Naive thymus-derived CD8-positive, alpha-beta T cell (primary cell): ENCODE measurements at regions of chr22 and their contacts with region 1.

Region 1: GRCh38 chr22:36331306-36331911 is 56.4 kb downstream of the MYH9 start:
- DNase-seq: peak; percentile 41 to 89 (median 74)
- ATAC-seq: peak; percentile 43 to 62
- H3K4me3 Mint-ChIP-seq: peak overlapping the region; percentile 80 to 96 (median 92)
- H3K27ac Mint-ChIP-seq: peak overlapping the region; percentile 96 to 99 (median 99)
- H3K4me1 Mint-ChIP-seq: peaks cover 71 to 99% (median 97%) of the 10 kb centered on the region in 4 donors
- H3K27me3 Mint-ChIP-seq: no peaks in the 10 kb centered on the region

Region 2: GRCh38 chr22:36287881-36288516 is 43.4 kb before region 1 on chr22:
- POLR2A ChIA-PET with region 1: interaction called, 17 read pairs
- DNase-seq: no peak
- ATAC-seq: no peak
- H3K4me3 Mint-ChIP-seq: peak overlapping the region in 8 of 10 donors; percentile 18 to 82 (median 46)
- H3K27ac Mint-ChIP-seq: peak overlapping the region; percentile 51 to 96 (median 88)
- H3K4me1 Mint-ChIP-seq: peaks cover 30 to 58% (median 51%) of the 10 kb centered on the region in 4 donors
- H3K27me3 Mint-ChIP-seq: no peaks in the 10 kb centered on the region

Region 3: GRCh38 chr22:36352803-36353507 is 21.5 kb after region 1 on chr22:
- POLR2A ChIA-PET with region 1: interaction called, 2,215 read pairs
- DNase-seq: peak in 4 of 10 donors; percentile 51 to 90 (median 78)
- ATAC-seq: peak; percentile 30 to 56
- H3K4me3 Mint-ChIP-seq: peak overlapping the region; percentile 52 to 91 (median 78)
- H3K27ac Mint-ChIP-seq: peak overlapping the region; percentile 90 to 99 (median 94)
- H3K4me1 Mint-ChIP-seq: peaks cover 50 to 96% (median 94%) of the 10 kb centered on the region in 4 donors
- H3K27me3 Mint-ChIP-seq: no peaks in the 10 kb centered on the region

Region 4: DNA sequence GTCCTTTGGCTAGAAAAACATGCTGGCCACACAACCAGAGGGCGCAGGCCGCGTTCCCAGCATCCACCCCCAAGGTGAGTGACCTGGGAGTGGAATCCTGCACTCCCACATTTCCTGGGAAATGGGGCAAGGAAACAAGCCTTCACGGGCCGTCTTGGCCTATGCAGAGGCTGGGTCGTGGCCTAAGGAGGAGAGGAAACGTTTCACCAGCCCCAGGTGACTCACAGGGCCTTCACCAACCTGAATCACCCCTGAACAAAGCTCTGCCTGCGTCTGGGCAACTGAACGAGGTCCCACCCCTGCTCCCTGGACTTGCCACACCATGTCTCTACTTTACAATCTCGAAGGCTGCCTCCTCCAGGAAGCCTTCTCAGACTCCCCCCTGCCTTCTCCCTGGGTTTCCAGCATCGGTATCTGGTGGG is 43.2 kb after region 1 on chr22:
- POLR2A ChIA-PET with region 1: interaction called, 2,215 read pairs
- DNase-seq: peak in 2 of 10 donors; percentile 9 to 49
- ATAC-seq: no peak
- H3K4me3 Mint-ChIP-seq: peak overlapping the region; percentile 48 to 96 (median 77)
- H3K27ac Mint-ChIP-seq: peak overlapping the region; percentile 90 to 99 (median 96)
- H3K4me1 Mint-ChIP-seq: peaks cover 44 to 97% (median 93%) of the 10 kb centered on the region in 4 donors
- H3K27me3 Mint-ChIP-seq: no peaks in the 10 kb centered on the region

Region 5: DNA sequence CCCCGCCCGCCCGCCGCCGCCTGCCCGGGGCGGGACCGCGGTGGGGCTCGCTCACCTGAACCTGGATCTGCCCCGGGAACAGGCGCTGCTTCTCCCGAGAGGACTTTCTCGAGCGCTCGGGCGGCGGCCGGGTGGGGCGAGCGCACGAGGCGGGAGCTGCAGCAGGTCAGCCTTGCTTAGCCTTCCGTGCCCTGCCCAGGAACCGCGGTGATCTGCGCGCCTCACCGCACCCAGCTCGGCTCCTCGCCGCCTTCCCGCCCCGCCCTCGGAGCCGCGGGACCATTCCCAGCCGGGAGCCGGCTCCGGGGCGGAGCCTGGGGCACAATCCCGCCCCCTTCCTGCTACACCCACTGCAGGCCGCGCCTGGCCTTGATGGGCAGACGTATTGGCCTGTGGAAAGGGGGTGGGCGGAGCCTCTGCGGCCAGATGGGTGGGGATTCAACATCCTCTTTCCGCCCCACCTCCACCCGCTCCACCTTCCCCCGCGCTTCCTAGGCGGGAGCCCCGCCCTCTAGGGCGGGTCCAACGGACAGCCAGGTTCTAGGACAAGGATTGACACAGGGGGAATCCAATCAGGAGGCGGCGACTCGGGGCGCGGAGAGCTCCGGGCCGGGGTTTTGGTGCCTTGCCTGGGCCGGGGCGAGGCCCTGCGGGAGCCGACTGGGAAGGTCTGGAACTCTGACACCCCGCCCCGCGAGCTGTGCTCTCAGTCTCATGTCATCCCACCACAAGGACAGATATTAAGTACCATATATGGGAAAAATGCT is 56.5 kb after region 1 on chr22 and contains the start of gene MYH9:
- POLR2A ChIA-PET with region 1: interaction called, 2,215 read pairs
- DNase-seq: peak; percentile 96 to 99 (median 98)
- ATAC-seq: peak; percentile 71 to 81
- H3K4me3 Mint-ChIP-seq: peak within 1 kb of the TSS; percentile 87 to 98 (median 92)
- H3K27ac Mint-ChIP-seq: peak within 1 kb of the TSS; percentile 78 to 99 (median 96)
- H3K4me1 Mint-ChIP-seq: peaks cover 20 to 56% (median 38%) of the 10 kb centered on the region in 4 donors
- H3K27me3 Mint-ChIP-seq: no peaks in the 10 kb centered on the region
- polyA plus RNA-seq, gene MYH9: 51.2 to 389 (median 105) TPM

Region 6: GRCh38 chr22:36435516-36436415 is 104.4 kb after region 1 on chr22:
- POLR2A ChIA-PET with region 1: interaction called, 12 read pairs
- DNase-seq: peak; percentile 51 to 87 (median 83)
- ATAC-seq: peak; percentile 90 to 91
- H3K4me3 Mint-ChIP-seq: peak overlapping the region; percentile 27 to 80 (median 64)
- H3K27ac Mint-ChIP-seq: peak overlapping the region; percentile 84 to 96 (median 92)
- H3K4me1 Mint-ChIP-seq: peaks cover 12 to 48% (median 36%) of the 10 kb centered on the region in 4 donors
- H3K27me3 Mint-ChIP-seq: no peaks in the 10 kb centered on the region

Region 7: GRCh38 chr22:36481393-36482168 is 150.2 kb after region 1 on chr22 and contains the start of gene TXN2:
- POLR2A ChIA-PET with region 1: interaction called, 15 read pairs
- DNase-seq: peak; percentile 91 to 99 (median 98)
- ATAC-seq: peak; percentile 89
- H3K4me3 Mint-ChIP-seq: peak within 1 kb of the TSS; percentile 91 to 98 (median 96)
- H3K27ac Mint-ChIP-seq: peak within 1 kb of the TSS; percentile 90 to 99 (median 97)
- H3K4me1 Mint-ChIP-seq: peaks cover 17 to 33% (median 21%) of the 10 kb centered on the region in 4 donors
- H3K27me3 Mint-ChIP-seq: no peaks in the 10 kb centered on the region
- polyA plus RNA-seq, gene TXN2: 145 to 158 (median 157) TPM

Region 8: DNA sequence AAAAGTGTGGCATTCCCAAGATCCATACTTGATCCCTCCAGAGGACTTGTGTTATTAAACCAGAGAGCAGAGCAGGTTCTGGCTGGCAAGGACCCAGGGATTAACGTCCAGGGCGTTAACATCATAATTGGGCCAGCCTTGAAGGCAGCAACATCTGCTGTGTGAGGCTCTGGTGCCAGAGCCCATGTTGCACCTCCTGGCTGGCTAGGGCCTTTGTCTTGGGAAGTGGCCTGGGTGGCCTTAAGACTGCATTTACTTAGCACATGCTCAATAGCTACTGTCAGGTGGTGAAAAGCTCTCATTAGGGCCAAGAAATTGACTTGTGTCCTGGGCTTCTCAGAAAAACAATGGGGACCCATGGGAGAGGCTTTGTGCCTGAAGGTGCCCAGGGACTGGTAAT is 305.5 kb after region 1 on chr22:
- POLR2A ChIA-PET with region 1: no interaction called
- DNase-seq: no peak
- ATAC-seq: no peak
- H3K4me3 Mint-ChIP-seq: no peak overlapping the region
- H3K27ac Mint-ChIP-seq: no peak overlapping the region
- H3K4me1 Mint-ChIP-seq: peaks cover 0 to 3% (median 0%) of the 10 kb centered on the region in 4 donors
- H3K27me3 Mint-ChIP-seq: peaks cover 39 to 89% (median 68%) of the 10 kb centered on the region in 5 donors

Region 9: DNA sequence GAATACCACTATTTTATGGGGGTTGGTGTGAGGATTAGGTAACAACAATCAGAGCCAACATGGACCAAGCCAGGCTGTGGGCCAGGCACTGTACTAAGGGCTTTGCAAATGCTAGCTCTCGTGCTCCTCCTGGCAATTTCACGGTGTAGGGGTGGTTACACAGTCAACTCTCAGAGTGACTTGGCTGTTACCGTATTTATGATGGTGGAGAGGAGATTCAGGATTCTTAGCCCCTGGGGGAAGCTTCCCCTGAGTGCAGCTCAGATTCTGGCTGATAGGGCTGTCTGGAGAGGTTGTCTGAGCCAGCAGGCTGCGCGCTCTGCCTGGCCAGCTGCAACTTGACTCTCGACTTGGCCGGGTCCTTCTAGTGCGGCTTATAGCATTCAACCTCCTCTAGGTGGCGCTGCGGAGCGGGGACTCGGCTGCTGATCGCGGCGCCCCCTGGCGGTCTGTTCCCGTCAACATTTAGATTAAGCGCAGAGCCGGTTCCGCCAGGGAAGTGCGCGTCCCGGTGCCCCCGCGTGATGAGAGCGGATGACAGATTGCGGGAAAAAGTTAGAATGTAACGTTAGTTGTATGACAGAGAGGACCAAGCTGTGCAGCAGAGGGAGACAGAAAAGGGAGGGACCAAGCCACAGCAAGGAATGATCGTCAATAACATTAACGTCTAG is 524.8 kb after region 1 on chr22:
- POLR2A ChIA-PET with region 1: no interaction called
- DNase-seq: peak; percentile 79 to 99 (median 92)
- ATAC-seq: peak; percentile 76 to 78
- H3K4me3 Mint-ChIP-seq: peak overlapping the region in 7 of 10 donors; percentile 15 to 69 (median 44)
- H3K27ac Mint-ChIP-seq: peak overlapping the region in 4 of 10 donors; percentile 1 to 60 (median 32)
- H3K4me1 Mint-ChIP-seq: peaks cover 6 to 29% (median 24%) of the 10 kb centered on the region in 4 donors
- H3K27me3 Mint-ChIP-seq: peaks cover 2 to 10% (median 4%) of the 10 kb centered on the region in 5 donors